Naive thymus-derived CD4-positive, alpha-beta T cell (primary cell): ENCODE measurements at regions of chr17 and their contacts with region 1.

Region 1: DNA sequence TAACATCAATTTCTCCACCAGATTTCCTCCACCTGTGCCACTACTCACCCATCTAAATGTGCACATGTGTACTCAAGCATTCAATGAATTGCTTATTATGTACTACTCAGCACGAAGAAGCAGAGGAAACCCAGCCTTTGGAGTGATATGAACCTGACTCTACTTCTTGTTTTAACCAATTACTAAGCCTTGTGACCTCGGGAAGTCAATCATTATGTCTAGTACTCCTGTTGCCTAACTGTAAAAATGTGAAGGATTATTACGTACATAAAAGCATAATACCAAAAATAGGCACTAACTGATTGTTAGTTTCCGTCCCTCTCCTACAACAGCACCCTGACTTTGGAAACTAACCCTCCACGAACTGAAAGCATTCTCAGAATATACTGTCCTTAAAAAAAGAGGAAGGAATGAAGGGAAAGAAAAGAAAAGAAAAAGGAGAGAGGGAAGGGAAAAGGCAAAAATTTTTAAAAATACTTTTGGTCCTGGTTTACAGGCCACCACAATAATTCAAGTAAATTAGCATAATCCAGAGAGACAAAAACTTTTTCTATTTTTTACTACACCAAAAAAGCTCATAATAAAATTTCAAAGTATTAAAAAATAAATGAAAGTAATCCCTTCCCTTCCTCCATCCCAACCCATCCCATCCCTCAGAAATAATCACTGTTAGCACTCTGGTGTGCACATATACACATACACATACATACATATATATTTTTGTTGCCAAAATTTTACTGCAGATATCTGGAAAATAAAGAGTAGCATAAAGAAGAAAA is 53.6 kb downstream of the KANSL1 start:
- DNase-seq: no peak
- ATAC-seq: no peak
- H3K4me3 ChIP-seq: no peak overlapping the region
- H3K4me3 Mint-ChIP-seq: peak overlapping the region in 9 of 10 donors; percentile 5 to 67 (median 52)
- H3K27ac ChIP-seq: peak overlapping the region; percentile 10
- H3K27ac Mint-ChIP-seq: peak overlapping the region in 8 of 9 donors; percentile 24 to 82 (median 53)
- H3K4me1 ChIP-seq: peaks cover 74 to 82% of the 10 kb centered on the region in 2 donors
- H3K4me1 Mint-ChIP-seq: peaks cover 71 to 98% (median 95%) of the 10 kb centered on the region in 7 donors
- H3K27me3 ChIP-seq: no peaks in the 10 kb centered on the region
- H3K27me3 Mint-ChIP-seq: no peaks in the 10 kb centered on the region

Region 2: DNA sequence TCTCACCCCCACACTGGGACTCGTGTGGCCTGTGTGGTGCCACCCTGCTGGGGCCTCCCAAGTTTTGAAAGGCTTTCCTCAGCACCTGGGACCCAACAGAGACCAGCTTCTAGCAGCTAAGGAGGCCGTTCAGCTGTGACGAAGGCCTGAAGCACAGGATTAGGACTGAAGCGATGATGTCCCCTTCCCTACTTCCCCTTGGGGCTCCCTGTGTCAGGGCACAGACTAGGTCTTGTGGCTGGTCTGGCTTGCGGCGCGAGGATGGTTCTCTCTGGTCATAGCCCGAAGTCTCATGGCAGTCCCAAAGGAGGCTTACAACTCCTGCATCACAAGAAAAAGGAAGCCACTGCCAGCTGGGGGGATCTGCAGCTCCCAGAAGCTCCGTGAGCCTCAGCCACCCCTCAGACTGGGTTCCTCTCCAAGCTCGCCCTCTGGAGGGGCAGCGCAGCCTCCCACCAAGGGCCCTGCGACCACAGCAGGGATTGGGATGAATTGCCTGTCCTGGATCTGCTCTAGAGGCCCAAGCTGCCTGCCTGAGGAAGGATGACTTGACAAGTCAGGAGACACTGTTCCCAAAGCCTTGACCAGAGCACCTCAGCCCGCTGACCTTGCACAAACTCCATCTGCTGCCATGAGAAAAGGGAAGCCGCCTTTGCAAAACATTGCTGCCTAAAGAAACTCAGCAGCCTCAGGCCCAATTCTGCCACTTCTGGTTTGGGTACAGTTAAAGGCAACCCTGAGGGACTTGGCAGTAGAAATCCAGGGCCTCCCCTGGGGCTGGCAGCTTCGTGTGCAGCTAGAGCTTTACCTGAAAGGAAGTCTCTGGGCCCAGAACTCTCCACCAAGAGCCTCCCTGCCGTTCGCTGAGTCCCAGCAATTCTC is 113.2 kb before region 1 on chr17:
- CTCF ChIA-PET with region 1: no interaction called
- POLR2A ChIA-PET with region 1: no interaction called
- intact Hi-C with region 1: no loop called
- DNase-seq: no peak
- ATAC-seq: peak; percentile 33
- H3K4me3 ChIP-seq: no peak overlapping the region
- H3K4me3 Mint-ChIP-seq: no peak overlapping the region
- H3K27ac ChIP-seq: peak overlapping the region; percentile 20
- H3K27ac Mint-ChIP-seq: peak overlapping the region in 4 of 9 donors; percentile 16 to 81 (median 51)
- H3K4me1 ChIP-seq: peaks cover 0 to under 1% of the 10 kb centered on the region in 2 donors
- H3K4me1 Mint-ChIP-seq: peaks cover 6 to 31% (median 15%) of the 10 kb centered on the region in 7 donors
- H3K27me3 ChIP-seq: no peaks in the 10 kb centered on the region
- H3K27me3 Mint-ChIP-seq: no peaks in the 10 kb centered on the region

Region 3: GRCh38 chr17:46097497-46097896 is 42.1 kb before region 1 on chr17:
- CTCF ChIA-PET with region 1: no interaction called
- POLR2A ChIA-PET with region 1: no interaction called
- intact Hi-C with region 1: loop called in 1 of 2 experiments (anchors 5 kb)
- DNase-seq: no peak
- ATAC-seq: no peak
- H3K4me3 ChIP-seq: no peak overlapping the region
- H3K4me3 Mint-ChIP-seq: peak overlapping the region in 3 of 10 donors; percentile 1 to 40 (median 12)
- H3K27ac ChIP-seq: no peak overlapping the region
- H3K27ac Mint-ChIP-seq: peak overlapping the region in 6 of 9 donors; percentile 1 to 37 (median 25)
- H3K4me1 ChIP-seq: peaks cover 27 to 36% of the 10 kb centered on the region in 2 donors
- H3K4me1 Mint-ChIP-seq: peaks cover 51 to 88% (median 80%) of the 10 kb centered on the region in 7 donors
- H3K27me3 ChIP-seq: no peaks in the 10 kb centered on the region
- H3K27me3 Mint-ChIP-seq: no peaks in the 10 kb centered on the region

Region 4: DNA sequence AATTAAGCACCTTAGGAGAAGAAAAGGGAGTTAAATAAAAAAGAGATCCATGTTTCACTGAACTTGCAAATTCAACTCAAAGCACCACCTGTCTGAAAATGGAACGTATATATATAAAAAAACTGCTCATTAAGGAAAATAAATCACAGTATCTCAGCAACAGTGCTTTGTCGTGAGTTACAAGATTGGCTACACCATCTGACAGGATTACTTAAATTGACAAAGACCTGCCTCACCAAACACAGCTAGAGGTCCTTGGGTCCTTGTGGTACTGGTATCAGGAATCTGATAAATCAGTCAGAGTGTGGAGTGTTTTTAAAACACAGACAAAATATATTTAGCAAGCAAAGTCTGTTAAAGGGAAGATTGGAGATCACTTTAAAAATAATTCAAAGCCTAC is 10.3 kb before region 1 on chr17:
- CTCF ChIA-PET with region 1: no interaction called
- POLR2A ChIA-PET with region 1: no interaction called
- intact Hi-C with region 1: no loop called
- DNase-seq: no peak
- ATAC-seq: no peak
- H3K4me3 ChIP-seq: no peak overlapping the region
- H3K4me3 Mint-ChIP-seq: peak overlapping the region in 7 of 10 donors; percentile 18 to 76 (median 40)
- H3K27ac ChIP-seq: no peak overlapping the region
- H3K27ac Mint-ChIP-seq: peak overlapping the region in 7 of 9 donors; percentile 28 to 82 (median 50)
- H3K4me1 ChIP-seq: peaks cover 51 to 57% of the 10 kb centered on the region in 2 donors
- H3K4me1 Mint-ChIP-seq: peaks cover 61 to 97% (median 93%) of the 10 kb centered on the region in 7 donors
- H3K27me3 ChIP-seq: no peaks in the 10 kb centered on the region
- H3K27me3 Mint-ChIP-seq: no peaks in the 10 kb centered on the region

Region 5: GRCh38 chr17:46154151-46154816 is 14.7 kb after region 1 on chr17:
- CTCF ChIA-PET with region 1: interaction called, 5 read pairs
- POLR2A ChIA-PET with region 1: no interaction called
- intact Hi-C with region 1: loop called (anchors 1 to 2 kb)
- DNase-seq: peak in 3 of 9 donors; percentile 14 to 44 (median 24)
- ATAC-seq: peak; percentile 58
- H3K4me3 ChIP-seq: peak overlapping the region; percentile 10
- H3K4me3 Mint-ChIP-seq: peak overlapping the region; percentile 57 to 82 (median 70)
- H3K27ac ChIP-seq: peak overlapping the region; percentile 27
- H3K27ac Mint-ChIP-seq: peak overlapping the region; percentile 4 to 87 (median 66)
- H3K4me1 ChIP-seq: peaks cover 87 to 89% of the 10 kb centered on the region in 2 donors
- H3K4me1 Mint-ChIP-seq: peaks cover 78 to 100% (median 90%) of the 10 kb centered on the region in 7 donors
- H3K27me3 ChIP-seq: no peaks in the 10 kb centered on the region
- H3K27me3 Mint-ChIP-seq: no peaks in the 10 kb centered on the region